OCI-LY7 (cell line): ENCODE measurements at regions of chr19 and their contacts with region 1.

Region 1: GRCh38 chr19:45692187-45693105 is at the start of gene QPCTL:
- DNase-seq: peak; percentile 100
- H3K4me3 ChIP-seq: peak within 1 kb of the TSS; percentile 93
- H3K27ac ChIP-seq: peak within 1 kb of the TSS; percentile 72
- H3K4me1 ChIP-seq: peaks cover 15% of the 10 kb centered on the region
- CTCF ChIP-seq: no peak
- total RNA-seq, gene QPCTL: 15.7 and 24.8 TPM in 2 replicates

Region 2: DNA sequence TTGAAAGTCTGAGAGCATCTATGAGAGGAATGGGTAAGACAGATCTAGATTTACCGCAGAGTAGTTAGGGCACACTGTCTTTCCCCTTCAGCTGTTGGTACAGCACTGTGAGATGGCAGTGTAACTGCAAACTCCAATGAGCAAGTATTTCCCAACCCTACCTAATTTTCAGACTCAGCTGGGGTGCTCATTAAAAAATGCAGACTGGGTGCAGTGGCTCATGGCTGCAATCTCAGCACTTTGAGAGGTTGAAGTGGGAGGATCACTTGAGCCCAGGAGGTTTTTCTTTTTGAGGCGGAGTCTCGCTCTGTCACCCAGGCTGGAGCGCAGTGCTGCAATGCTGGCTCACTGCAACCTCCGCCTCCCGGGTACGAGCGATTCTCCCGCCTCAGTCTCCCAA is 12.7 kb after region 1 on chr19:
- CTCF ChIA-PET with region 1: no interaction called
- POLR2A ChIA-PET with region 1: interaction called, 16 read pairs
- intact Hi-C with region 1: loop called (anchors 1 kb)
- DNase-seq: no peak
- H3K4me3 ChIP-seq: no peak overlapping the region
- H3K27ac ChIP-seq: peak overlapping the region; percentile 43
- H3K4me1 ChIP-seq: peaks cover 48% of the 10 kb centered on the region
- CTCF ChIP-seq: no peak

Region 3: DNA sequence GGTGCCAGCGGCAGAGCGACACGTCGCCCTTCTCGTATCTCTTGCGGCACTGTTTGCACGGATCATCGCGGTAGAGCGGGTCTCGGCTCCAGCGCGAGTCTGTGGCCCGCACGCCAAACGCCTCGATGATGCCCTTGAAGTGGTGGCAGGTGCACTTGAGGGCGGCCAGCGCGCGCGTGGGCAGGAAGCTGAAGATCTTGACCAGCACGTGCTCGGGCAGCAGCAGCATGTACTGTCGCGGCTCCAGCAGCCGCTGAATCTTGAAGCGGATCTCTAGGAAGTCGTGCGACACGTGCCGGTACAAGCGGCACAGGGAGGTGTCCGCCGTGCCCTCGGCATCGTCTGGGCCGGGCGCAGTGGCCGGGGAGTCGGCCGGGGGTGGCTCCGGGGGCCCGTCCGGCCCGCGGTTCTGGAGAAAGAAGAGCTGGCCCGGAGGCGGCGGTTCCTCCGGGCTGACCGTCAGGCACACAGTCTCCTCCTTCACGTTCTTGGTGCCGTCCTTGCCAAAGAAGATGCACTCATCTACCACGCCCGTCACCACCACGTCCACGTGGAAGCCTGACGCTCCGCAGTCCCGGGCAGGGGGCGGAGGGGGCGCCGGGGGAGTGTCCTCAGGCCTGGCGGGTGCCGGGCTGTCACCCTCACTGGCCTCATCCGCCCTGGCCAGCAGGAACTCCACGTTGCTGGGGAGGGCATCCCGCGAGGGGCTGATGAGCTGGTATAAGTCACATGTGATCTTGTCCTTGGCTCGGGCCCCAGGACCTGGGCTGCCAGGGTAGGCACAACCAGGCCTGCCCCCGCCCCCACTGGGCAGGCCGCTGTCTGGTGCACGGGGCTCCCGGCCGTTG is 19.6 kb after region 1 on chr19:
- CTCF ChIA-PET with region 1: interaction called, 3 read pairs
- POLR2A ChIA-PET with region 1: interaction called, 16 read pairs
- intact Hi-C with region 1: loop called (anchors 1 kb)
- DNase-seq: no peak
- H3K4me3 ChIP-seq: no peak overlapping the region
- H3K27ac ChIP-seq: no peak overlapping the region
- H3K4me1 ChIP-seq: peaks cover 59% of the 10 kb centered on the region
- CTCF ChIP-seq: no peak

Region 4: DNA sequence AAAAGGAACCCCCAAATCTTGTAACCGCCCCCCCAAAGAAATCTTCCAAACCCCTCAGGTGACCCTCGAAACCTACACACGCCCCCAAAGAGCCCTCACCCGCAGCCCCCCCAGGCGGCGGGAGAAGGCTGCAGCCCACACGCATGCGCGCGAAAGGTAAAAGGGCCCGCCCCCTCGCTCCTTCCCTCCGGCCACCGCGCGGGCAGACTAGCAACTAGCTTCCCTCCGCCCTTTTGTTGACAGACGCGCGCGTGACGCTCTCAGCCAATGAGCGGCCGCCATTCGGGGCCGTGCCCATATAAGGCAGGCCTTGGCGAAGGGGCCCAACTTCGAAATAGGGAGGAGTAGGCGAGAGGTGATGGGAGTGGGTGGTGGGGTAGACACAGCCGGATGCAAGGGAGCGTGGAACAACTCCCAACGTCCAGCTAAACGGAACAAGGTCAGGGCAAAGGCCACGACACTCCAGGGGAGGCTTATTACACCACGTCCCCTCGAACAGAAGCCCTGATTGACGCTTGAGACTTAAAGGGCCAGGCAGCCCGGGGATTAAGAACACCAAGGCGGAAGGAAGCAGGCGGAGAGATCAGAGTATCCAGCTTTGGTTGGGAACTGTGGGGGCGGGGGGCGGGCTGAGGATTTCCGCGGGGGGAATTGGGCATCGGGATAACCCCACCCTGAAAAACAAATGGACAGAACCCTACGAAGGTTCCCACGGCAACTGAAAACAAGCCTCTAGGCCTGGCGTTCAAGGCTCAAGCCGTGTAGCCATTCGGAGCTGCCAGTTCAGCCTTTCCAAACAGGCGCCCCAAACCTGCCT is 24.9 kb after region 1 on chr19:
- CTCF ChIA-PET with region 1: interaction called, 4 read pairs
- POLR2A ChIA-PET with region 1: interaction called, 10 read pairs
- intact Hi-C with region 1: no loop called
- DNase-seq: peak; percentile 99
- H3K4me3 ChIP-seq: peak overlapping the region; percentile 87
- H3K27ac ChIP-seq: peak overlapping the region; percentile 71
- H3K4me1 ChIP-seq: peaks cover 29% of the 10 kb centered on the region
- CTCF ChIP-seq: peak; percentile 55